Activated CD4-positive, alpha-beta T cell treated with anti-CD3 and anti-CD28 coated beads for 36 hours (primary cell): ENCODE measurements at regions of chr12 and their contacts with region 1.

Region 1: GRCh38 chr12:122526683-122527477 is at the starts of genes KNTC1 and RSRC2:
- DNase-seq: peak; percentile 99
- ATAC-seq: peak; percentile 93
- H3K4me3 Mint-ChIP-seq: no peak within 1 kb of the TSS
- H3K27ac Mint-ChIP-seq: no peak within 1 kb of the TSS
- H3K4me1 Mint-ChIP-seq: peaks cover 37% of the 10 kb centered on the region
- H3K27me3 Mint-ChIP-seq: no peaks in the 10 kb centered on the region
- total RNA-seq, gene KNTC1: 136 to 175 TPM
- total RNA-seq, gene RSRC2: 92.7 to 105 TPM

Region 2: GRCh38 chr12:121802846-121803630 is 723.8 kb before region 1 on chr12:
- CTCF ChIA-PET with region 1: no interaction called
- POLR2A ChIA-PET with region 1: interaction called, 4 read pairs
- intact Hi-C with region 1: loop called in 1 of 2 experiments (anchors 5 kb)
- DNase-seq: peak; percentile 95
- ATAC-seq: peak; percentile 62
- H3K4me3 Mint-ChIP-seq: peak overlapping the region; percentile 88
- H3K27ac Mint-ChIP-seq: peak overlapping the region; percentile 99
- H3K4me1 Mint-ChIP-seq: peaks cover 30% of the 10 kb centered on the region
- H3K27me3 Mint-ChIP-seq: no peaks in the 10 kb centered on the region

Region 3: DNA sequence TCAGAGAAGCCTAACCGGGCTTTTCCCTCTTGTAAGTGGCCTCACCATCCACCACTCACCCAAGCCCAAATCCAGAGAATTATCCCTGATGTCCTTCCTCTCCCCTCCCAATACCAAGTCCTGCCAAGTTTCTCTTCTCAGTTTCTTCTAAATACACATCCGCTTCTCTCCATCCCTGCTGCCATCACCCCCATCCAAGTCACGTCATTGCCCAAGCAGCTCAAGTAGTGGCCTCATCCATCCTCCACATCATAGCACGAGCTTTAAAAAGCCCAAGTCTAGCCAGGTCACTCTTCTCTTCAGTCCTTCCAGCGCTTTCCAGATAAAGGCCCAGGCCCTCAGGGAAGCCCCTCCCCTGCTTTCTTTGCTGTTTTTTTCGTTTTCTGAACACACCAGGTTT is 378.2 kb before region 1 on chr12:
- CTCF ChIA-PET with region 1: no interaction called
- POLR2A ChIA-PET with region 1: no interaction called
- intact Hi-C with region 1: no loop called
- DNase-seq: no peak
- ATAC-seq: no peak
- H3K4me3 Mint-ChIP-seq: no peak overlapping the region
- H3K27ac Mint-ChIP-seq: peak overlapping the region; percentile 9
- H3K4me1 Mint-ChIP-seq: peaks cover 2% of the 10 kb centered on the region
- H3K27me3 Mint-ChIP-seq: no peaks in the 10 kb centered on the region

Region 4: DNA sequence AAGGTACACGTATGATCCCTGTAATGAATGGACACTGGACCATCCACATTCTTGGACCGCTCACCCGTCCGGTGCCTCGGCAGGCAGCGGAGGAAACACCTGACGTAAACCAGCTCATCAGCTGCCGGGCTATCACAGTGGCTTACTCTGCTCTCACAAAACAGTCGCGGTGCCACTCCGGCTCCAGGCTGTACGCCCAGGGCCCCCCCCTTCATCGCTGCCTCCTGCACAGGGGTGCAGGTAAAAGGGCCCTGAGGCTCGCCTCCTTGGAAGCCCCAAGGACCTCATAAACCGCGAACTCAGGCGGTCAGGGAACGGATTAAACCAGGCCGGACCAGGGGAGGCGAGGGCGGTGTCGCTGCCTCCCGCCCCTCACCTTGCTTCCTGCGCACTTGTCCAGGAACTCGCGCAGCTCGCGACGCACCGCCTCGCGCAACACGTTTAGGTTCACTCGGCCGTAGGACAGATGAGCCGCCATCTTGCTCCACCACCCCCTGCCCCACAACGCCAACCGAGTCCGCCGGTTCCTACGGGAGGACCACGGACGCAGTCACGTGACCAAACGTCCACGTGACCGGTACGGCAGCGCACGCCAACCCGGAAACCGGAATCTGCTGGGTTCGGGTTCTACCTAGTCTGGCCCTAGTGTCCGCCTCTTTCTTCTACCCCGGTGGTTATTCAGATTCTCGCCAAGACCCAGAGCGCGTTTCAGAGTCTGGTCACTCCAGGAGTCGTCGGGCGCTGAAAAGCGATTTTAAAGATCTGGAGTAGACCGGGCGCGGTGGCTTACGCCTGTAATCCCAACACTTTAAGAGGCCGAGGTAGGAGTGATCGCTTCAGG is 260.7 kb before region 1 on chr12 and contains the start of gene VPS33A:
- CTCF ChIA-PET with region 1: no interaction called
- POLR2A ChIA-PET with region 1: no interaction called
- intact Hi-C with region 1: loop called in 1 of 2 experiments (anchors 1 kb)
- DNase-seq: peak; percentile 98
- ATAC-seq: peak; percentile 86
- H3K4me3 Mint-ChIP-seq: peak within 1 kb of the TSS; percentile 97
- H3K27ac Mint-ChIP-seq: peak within 1 kb of the TSS; percentile 98
- H3K4me1 Mint-ChIP-seq: peaks cover 23% of the 10 kb centered on the region
- H3K27me3 Mint-ChIP-seq: no peaks in the 10 kb centered on the region
- total RNA-seq, gene VPS33A: 24.8 to 26.4 TPM

Region 5: DNA sequence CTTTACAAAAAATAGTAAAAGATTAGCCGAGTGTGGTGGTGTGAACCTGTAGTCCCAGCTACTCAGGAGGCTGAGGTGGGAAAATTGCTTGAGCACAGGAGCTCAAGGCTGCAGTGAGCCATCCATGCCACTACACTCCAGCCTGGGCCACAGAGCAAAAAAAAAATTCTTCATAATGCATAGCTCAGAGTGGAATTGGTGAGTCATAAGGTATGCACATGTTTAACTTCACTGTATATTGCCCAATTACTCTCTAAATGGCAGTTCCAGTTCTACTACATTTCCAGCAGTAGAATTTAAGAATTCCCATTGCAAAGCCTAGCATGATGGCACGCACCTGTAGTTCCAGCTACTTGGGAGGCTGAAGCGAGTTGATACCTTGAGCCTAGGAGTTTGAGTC is 77.5 kb before region 1 on chr12:
- CTCF ChIA-PET with region 1: no interaction called
- POLR2A ChIA-PET with region 1: no interaction called
- intact Hi-C with region 1: loop called in 1 of 2 experiments (anchors 1 kb)
- DNase-seq: peak; percentile 35
- ATAC-seq: peak; percentile 55
- H3K4me3 Mint-ChIP-seq: no peak overlapping the region
- H3K27ac Mint-ChIP-seq: no peak overlapping the region
- H3K4me1 Mint-ChIP-seq: peaks cover 28% of the 10 kb centered on the region
- H3K27me3 Mint-ChIP-seq: no peaks in the 10 kb centered on the region

Region 6: DNA sequence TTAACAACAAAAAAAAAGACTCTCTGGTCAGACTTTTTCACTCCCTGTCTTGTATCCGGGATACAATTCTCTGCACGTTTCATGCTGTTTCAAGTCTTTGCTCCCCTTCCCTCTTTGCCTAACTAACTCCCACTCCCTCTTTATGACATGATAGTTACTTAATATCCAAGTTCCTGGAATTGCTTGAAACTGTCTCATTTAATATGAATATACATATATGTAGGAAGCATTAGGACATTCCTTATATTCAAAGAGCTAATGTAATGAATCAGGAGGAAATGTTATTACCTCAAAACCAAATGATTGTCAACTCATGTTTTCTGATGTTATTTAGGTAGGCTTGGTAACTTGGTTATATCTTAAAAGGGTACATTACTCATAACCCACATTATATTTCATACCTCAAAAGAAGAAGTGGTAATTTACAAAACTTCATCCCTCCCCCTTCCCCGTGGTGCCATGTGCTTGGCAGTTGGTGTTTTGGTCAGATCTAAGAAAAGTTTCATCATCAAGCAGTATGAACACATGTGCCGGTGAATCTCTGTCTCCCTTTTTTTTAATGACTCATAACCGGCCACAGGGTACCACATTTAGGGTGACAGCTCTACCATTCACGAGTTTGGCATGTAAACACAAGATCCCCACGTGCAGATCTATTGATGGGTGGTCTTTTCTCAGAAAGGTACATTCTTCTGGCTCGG is 119.8 kb after region 1 on chr12:
- CTCF ChIA-PET with region 1: no interaction called
- POLR2A ChIA-PET with region 1: no interaction called
- intact Hi-C with region 1: loop called in 1 of 2 experiments (anchors 1 kb)
- DNase-seq: peak; percentile 81
- ATAC-seq: peak; percentile 97
- H3K4me3 Mint-ChIP-seq: peak overlapping the region; percentile 54
- H3K27ac Mint-ChIP-seq: peak overlapping the region; percentile 79
- H3K4me1 Mint-ChIP-seq: peaks cover 18% of the 10 kb centered on the region
- H3K27me3 Mint-ChIP-seq: peaks cover 2% of the 10 kb centered on the region

Region 7: GRCh38 chr12:122965851-122966722 is 439.2 kb after region 1 on chr12 and contains the start of gene ABCB9:
- CTCF ChIA-PET with region 1: no interaction called
- POLR2A ChIA-PET with region 1: no interaction called
- intact Hi-C with region 1: loop called in 1 of 2 experiments (anchors 2 kb)
- DNase-seq: peak; percentile 99
- ATAC-seq: peak; percentile 99
- H3K4me3 Mint-ChIP-seq: peak within 1 kb of the TSS; percentile 63
- H3K27ac Mint-ChIP-seq: peak within 1 kb of the TSS; percentile 42
- H3K4me1 Mint-ChIP-seq: peaks cover 2% of the 10 kb centered on the region
- H3K27me3 Mint-ChIP-seq: no peaks in the 10 kb centered on the region
- total RNA-seq, gene ABCB9: 3.8 to 6.3 TPM